ENCODE measurements at regions of chr9 and their contacts with region 1.

Region 1: DNA sequence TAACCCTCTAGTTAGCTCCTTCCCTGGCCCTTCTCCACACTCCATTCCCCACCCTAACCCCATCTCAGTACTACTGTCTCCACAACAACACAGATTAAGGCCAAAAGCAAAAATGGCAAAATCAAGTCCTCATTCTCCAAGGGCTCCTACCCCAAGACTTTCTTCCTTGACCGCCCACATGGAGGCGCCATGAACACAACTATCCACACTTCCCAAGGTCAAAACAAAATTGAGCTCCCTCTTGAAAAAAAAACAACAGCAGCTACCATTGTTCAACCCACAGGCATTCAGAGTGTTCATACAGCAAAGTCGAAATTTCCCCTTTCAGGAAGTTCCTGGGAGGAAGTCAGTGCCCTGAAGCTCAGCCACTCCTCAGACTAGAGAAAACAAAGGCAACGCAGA is 54.4 kb downstream of the GNAQ start:
- DNase-seq: peak; percentile 65 to 66
- ATAC-seq: peak; percentile 80 to 93 (median 86)
- H3K4me3 ChIP-seq: no peak overlapping the region
- H3K27ac ChIP-seq: peak overlapping the region in 7 of 10 donors; percentile 28 to 80 (median 63)
- H3K4me1 ChIP-seq: peaks cover 0 to 68% (median 46%) of the 10 kb centered on the region in 9 donors
- H3K27me3 ChIP-seq: no peaks in the 10 kb centered on the region
- CTCF ChIP-seq: peak in 8 of 9 donors; percentile 29 to 73 (median 61)

Region 2: DNA sequence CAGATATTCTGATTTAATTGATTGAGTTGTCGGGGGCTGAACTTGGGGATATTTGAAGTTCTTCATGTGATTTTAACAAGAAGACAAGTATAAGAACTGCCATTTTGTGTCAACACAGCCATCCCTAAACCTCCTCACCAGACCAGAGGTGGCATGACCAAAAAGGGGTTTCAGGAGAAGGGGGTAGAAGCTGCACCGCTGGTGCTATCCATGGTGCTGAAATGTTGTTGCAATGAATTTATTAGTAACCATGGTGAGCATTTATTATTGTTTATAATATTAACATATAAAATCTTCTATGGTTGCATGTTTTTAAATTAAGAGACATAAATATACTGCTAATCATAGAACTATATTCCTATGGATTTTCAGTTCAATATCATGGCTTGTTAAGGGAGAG is 401.4 kb before region 1 on chr9:
- intact Hi-C with region 1: no loop called
- DNase-seq: no peak
- ATAC-seq: no peak
- H3K4me3 ChIP-seq: no peak overlapping the region
- H3K27ac ChIP-seq: no peak overlapping the region
- H3K4me1 ChIP-seq: no peaks in the 10 kb centered on the region
- H3K27me3 ChIP-seq: no peaks in the 10 kb centered on the region
- CTCF ChIP-seq: no peak

Region 3: DNA sequence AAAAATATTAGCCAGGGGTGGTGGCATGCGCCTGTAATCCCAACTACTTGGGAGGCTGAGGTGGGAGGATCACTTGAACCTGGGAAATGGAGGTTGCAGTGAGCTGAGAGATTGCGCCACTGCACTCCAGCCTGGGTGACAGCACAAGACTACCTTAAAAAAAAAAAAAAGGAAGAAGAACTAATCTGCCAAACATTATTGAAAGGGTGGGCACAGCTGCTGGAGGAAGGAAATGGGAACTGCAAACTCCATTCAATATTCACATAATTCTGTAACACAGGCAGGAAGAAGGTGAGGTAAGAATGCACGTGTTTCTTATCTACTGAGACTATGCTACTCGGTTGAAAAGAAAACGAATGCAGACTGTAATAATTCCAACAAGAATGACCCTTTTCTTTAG is 208.0 kb before region 1 on chr9:
- intact Hi-C with region 1: no loop called
- DNase-seq: no peak
- ATAC-seq: peak in 7 of 8 donors; percentile 58 to 91 (median 80)
- H3K4me3 ChIP-seq: no peak overlapping the region
- H3K27ac ChIP-seq: peak overlapping the region in 7 of 10 donors; percentile 16 to 69 (median 51)
- H3K4me1 ChIP-seq: peaks cover 0 to 40% (median 13%) of the 10 kb centered on the region in 9 donors
- H3K27me3 ChIP-seq: no peaks in the 10 kb centered on the region
- CTCF ChIP-seq: no peak

Region 4: GRCh38 chr9:78029551-78030295 is 52.5 kb after region 1 on chr9:
- intact Hi-C with region 1: loop called in 6 of 10 experiments (anchors 1 to 10 kb)
- DNase-seq: no peak
- ATAC-seq: no peak
- H3K4me3 ChIP-seq: peak overlapping the region in 9 of 10 donors; percentile 60 to 92 (median 69)
- H3K27ac ChIP-seq: peak overlapping the region; percentile 75 to 99 (median 94)
- H3K4me1 ChIP-seq: peaks cover 1 to 73% (median 51%) of the 10 kb centered on the region in 9 donors
- H3K27me3 ChIP-seq: no peaks in the 10 kb centered on the region
- CTCF ChIP-seq: no peak

Region 5: GRCh38 chr9:78121488-78121887 is 144.3 kb after region 1 on chr9:
- intact Hi-C with region 1: loop called in 2 of 10 experiments (anchors 10 kb)
- DNase-seq: peak; percentile 44 to 57
- ATAC-seq: no peak
- H3K4me3 ChIP-seq: no peak overlapping the region
- H3K27ac ChIP-seq: no peak overlapping the region
- H3K4me1 ChIP-seq: peaks cover 0 to 26% (median 0%) of the 10 kb centered on the region in 9 donors
- H3K27me3 ChIP-seq: peaks cover 0 to 11% (median 0%) of the 10 kb centered on the region in 7 donors
- CTCF ChIP-seq: peak in 8 of 9 donors; percentile 8 to 75 (median 60)

Measured in heart right ventricle (tissue), 16 donors.